ENCODE measurements at regions of chr2 and their contacts with region 1.

Region 1: GRCh38 chr2:26274058-26274613 is 29.4 kb downstream of the HADHB start:
- DNase-seq: peak; percentile 72
- H3K4me3 Mint-ChIP-seq: no peak overlapping the region
- H3K27ac Mint-ChIP-seq: peak overlapping the region; percentile 42
- H3K4me1 Mint-ChIP-seq: peaks cover 26% of the 10 kb centered on the region
- H3K27me3 Mint-ChIP-seq: no peaks in the 10 kb centered on the region
- CTCF ChIP-seq: no peak

Region 2: GRCh38 chr2:26249625-26250024 is 24.5 kb before region 1 on chr2:
- CTCF ChIA-PET with region 1: no interaction called
- intact Hi-C with region 1: no loop called
- DNase-seq: no peak
- H3K4me3 Mint-ChIP-seq: no peak overlapping the region
- H3K27ac Mint-ChIP-seq: no peak overlapping the region
- H3K4me1 Mint-ChIP-seq: peaks cover 13% of the 10 kb centered on the region
- H3K27me3 Mint-ChIP-seq: no peaks in the 10 kb centered on the region
- CTCF ChIP-seq: no peak

Region 3: DNA sequence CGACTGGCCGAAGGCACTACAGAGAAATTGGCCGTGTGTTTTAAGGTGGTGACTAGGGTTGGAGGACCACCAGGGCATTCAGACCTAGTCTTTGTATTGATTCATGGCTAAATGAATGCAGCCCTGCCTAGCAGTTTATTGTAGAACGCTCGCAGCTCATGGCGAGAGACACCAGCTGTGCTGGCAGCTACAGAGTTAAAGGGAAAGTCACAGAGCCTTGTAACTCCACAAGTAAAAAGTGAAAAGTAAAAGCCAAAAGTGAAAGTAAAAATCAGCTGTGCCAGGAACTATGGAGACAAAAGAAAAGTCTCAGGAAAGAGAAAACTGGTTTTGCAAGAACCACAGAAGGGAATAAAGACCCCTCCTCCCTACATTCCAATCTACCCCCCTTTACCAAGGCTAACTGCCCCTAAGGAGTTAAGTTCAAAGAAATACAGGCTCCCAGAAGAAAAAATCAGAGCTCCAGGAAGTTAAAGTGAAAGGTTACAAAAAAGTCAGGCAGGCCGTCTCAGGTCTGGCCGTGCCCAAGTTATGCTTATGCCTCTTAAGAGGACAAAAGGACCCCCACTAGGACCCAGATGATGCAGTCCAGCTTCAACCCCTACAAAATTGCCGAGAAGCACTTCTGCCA is 25.4 kb after region 1 on chr2:
- CTCF ChIA-PET with region 1: interaction called, 3 read pairs
- intact Hi-C with region 1: loop called (anchors 2 kb)
- DNase-seq: peak; percentile 35
- H3K4me3 Mint-ChIP-seq: no peak overlapping the region
- H3K27ac Mint-ChIP-seq: no peak overlapping the region
- H3K4me1 Mint-ChIP-seq: peaks cover 16% of the 10 kb centered on the region
- H3K27me3 Mint-ChIP-seq: no peaks in the 10 kb centered on the region
- CTCF ChIP-seq: no peak